GM10248 (cell line): ENCODE measurements at regions of chr13 and their contacts with region 1.

Region 1: DNA sequence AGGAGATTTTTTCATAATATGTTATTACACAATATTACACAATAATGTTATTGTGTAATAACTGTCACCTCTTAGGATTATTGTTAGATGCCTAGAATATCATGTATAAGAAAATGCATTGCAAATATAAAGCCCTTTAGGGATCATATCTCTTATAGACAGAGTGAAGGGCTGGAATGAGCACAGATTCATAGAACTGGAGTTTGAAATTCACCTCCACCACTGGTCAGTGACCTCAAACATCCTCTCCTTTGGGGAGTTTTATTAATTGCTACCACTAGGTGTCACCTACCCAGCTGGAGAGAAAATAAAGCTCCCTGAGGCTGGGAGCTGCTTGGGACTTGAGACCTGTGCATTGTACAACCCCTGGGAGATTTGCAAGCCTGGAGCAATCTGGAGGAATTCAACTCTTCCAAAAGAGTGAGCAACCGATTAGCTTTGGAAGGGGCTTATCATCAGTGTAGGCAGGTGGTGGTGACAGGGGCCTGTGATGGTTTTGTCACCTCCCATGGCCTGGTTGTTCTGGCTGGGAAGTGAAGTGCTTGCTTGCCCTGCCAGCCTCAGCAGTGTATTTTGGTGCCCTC is 30.3 kb upstream of the FRY start:
- DNase-seq: peak; percentile 70
- CTCF ChIP-seq: peak; percentile 57

Region 2: GRCh38 chr13:31174018-31174417 is 827.3 kb before region 1 on chr13:
- CTCF ChIA-PET with region 1: no interaction called
- POLR2A ChIA-PET with region 1: no interaction called
- DNase-seq: no peak
- CTCF ChIP-seq: no peak

Region 3: GRCh38 chr13:31951215-31951678 is 50.0 kb before region 1 on chr13:
- CTCF ChIA-PET with region 1: no interaction called
- POLR2A ChIA-PET with region 1: no interaction called
- DNase-seq: peak; percentile 81
- CTCF ChIP-seq: no peak

Region 4: DNA sequence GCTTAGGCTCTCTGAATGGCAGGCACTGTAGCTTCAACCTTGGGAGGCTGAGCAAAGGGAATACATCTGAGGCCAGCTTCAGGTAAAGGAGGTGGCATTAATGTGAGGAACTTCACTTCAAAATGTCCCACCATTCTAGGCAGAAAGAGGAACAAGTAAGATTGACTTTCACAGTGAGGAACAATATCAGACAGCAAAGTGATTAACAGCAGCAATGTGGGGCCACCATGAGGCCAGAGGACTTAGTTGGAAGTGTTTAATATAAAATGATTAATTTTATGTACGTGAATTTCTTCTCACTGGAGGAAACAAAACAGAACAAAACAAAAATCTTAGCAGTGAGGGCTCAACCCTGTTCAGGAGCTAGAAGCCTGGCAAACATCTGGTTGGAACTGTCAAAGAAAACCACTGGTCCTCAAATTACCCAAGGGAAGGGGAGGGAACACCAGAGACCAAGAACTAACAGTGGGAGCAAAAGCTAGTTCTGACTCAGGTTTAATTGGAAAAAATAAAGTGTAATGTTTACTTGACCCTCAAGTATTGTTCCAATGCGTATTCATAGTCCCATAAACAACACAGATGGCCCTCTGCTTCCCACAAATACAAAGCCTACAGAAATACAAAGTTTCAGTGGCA is 13.6 kb before region 1 on chr13:
- CTCF ChIA-PET with region 1: interaction called, 10 read pairs
- POLR2A ChIA-PET with region 1: no interaction called
- DNase-seq: peak; percentile 23
- CTCF ChIP-seq: peak; percentile 20

Region 5: GRCh38 chr13:32164622-32165268 is 163.5 kb after region 1 on chr13:
- CTCF ChIA-PET with region 1: no interaction called
- POLR2A ChIA-PET with region 1: no interaction called
- DNase-seq: peak; percentile 22
- CTCF ChIP-seq: no peak

Region 6: GRCh38 chr13:32616883-32617511 is 615.7 kb after region 1 on chr13:
- CTCF ChIA-PET with region 1: no interaction called
- POLR2A ChIA-PET with region 1: no interaction called
- DNase-seq: no peak
- CTCF ChIP-seq: no peak